Activated CD4-positive, alpha-beta memory T cell treated with anti-CD3 and anti-CD28 coated beads, Interleukin-2, amount 10 ng/mL, durations not matched to agents 7 days and 5 days (primary cell): ENCODE measurements at regions of chr20 and their contacts with region 1.

Region 1: GRCh38 chr20:47379433-47380150 is 23.1 kb upstream of the ZMYND8 start:
- DNase-seq: no peak
- H3K4me3 Mint-ChIP-seq: no peak overlapping the region
- H3K27ac Mint-ChIP-seq: peak overlapping the region; percentile 40
- H3K4me1 Mint-ChIP-seq: peaks cover 36% of the 10 kb centered on the region
- H3K27me3 Mint-ChIP-seq: no peaks in the 10 kb centered on the region

Region 2: DNA sequence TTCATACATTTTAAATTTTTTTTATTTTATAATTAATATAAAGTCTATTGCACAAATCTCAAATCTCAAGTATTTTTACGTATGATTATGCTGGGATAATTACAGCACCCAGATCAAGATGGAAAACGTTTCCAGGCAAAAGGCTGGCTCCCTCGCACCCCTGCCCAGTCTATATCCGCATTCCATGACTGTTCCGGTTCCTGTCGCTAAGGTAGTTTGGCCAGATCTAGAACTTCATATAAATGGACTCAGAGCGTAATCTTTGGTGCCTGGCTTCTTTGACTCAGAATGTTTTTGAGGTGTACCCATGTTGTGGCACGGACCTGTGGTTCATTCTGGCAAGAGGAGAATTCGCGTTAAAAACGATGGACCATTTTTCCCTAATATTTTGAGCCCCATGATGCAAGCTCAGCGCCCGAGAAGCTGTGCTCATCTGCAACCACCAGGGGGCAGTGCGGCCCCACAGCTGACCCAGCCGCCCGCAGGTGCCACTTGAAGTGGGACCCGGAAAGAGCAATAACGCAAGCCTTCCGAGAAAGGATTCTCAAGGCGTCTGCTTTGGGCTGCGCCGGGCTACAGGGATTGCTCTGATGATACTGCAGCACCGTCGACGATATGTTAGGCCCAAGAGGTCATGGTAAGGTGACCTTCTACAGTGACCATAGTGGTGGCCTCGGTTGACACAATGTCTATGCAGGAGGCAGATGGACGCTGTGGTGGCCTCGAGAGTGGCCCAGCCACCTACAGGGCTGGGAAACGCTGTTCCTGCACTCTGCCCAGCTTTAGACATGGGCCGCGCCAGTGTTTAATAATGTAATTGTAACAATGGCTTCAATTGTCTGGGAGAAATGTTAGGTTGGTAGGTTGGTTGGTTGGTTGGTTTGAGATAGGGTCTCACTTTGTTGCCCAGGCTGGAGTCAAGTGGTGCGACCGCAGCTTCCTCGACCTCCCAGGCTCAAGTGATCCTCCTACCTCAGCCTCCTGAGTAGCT is 183.2 kb before region 1 on chr20:
- CTCF ChIA-PET with region 1: interaction called, 77 read pairs
- POLR2A ChIA-PET with region 1: interaction called, 7 read pairs
- DNase-seq: peak; percentile 84
- H3K4me3 Mint-ChIP-seq: no peak overlapping the region
- H3K27ac Mint-ChIP-seq: no peak overlapping the region
- H3K4me1 Mint-ChIP-seq: peaks cover 12% of the 10 kb centered on the region
- H3K27me3 Mint-ChIP-seq: peaks cover 5% of the 10 kb centered on the region

Region 3: GRCh38 chr20:47220161-47220582 is 159.4 kb before region 1 on chr20:
- CTCF ChIA-PET with region 1: interaction called, 35 read pairs
- POLR2A ChIA-PET with region 1: interaction called, 3 read pairs
- DNase-seq: peak; percentile 50
- H3K4me3 Mint-ChIP-seq: no peak overlapping the region
- H3K27ac Mint-ChIP-seq: no peak overlapping the region
- H3K4me1 Mint-ChIP-seq: peaks cover 13% of the 10 kb centered on the region
- H3K27me3 Mint-ChIP-seq: no peaks in the 10 kb centered on the region

Region 4: GRCh38 chr20:47290008-47290407 is 89.6 kb before region 1 on chr20:
- CTCF ChIA-PET with region 1: interaction called, 11 read pairs
- POLR2A ChIA-PET with region 1: no interaction called
- DNase-seq: no peak
- H3K4me3 Mint-ChIP-seq: no peak overlapping the region
- H3K27ac Mint-ChIP-seq: no peak overlapping the region
- H3K4me1 Mint-ChIP-seq: peaks cover 10% of the 10 kb centered on the region
- H3K27me3 Mint-ChIP-seq: no peaks in the 10 kb centered on the region

Region 5: GRCh38 chr20:47356526-47357295 is 22.9 kb before region 1 on chr20 and contains the start of gene ZMYND8:
- CTCF ChIA-PET with region 1: interaction called, 59 read pairs
- POLR2A ChIA-PET with region 1: interaction called, 53 read pairs
- DNase-seq: peak; percentile 99
- H3K4me3 Mint-ChIP-seq: peak within 1 kb of the TSS; percentile 81
- H3K27ac Mint-ChIP-seq: peak within 1 kb of the TSS; percentile 94
- H3K4me1 Mint-ChIP-seq: peaks cover 24% of the 10 kb centered on the region
- H3K27me3 Mint-ChIP-seq: no peaks in the 10 kb centered on the region
- total RNA-seq, gene ZMYND8: 37.8 to 44.2 TPM

Region 6: GRCh38 chr20:47610247-47610944 is 230.8 kb after region 1 on chr20:
- CTCF ChIA-PET with region 1: interaction called, 19 read pairs
- POLR2A ChIA-PET with region 1: no interaction called
- DNase-seq: peak; percentile 85
- H3K4me3 Mint-ChIP-seq: peak overlapping the region; percentile 54
- H3K27ac Mint-ChIP-seq: peak overlapping the region; percentile 85
- H3K4me1 Mint-ChIP-seq: peaks cover 71% of the 10 kb centered on the region
- H3K27me3 Mint-ChIP-seq: no peaks in the 10 kb centered on the region